IMR-90 (cell line): ENCODE measurements at regions of chr12 and their contacts with region 1.

Region 1: DNA sequence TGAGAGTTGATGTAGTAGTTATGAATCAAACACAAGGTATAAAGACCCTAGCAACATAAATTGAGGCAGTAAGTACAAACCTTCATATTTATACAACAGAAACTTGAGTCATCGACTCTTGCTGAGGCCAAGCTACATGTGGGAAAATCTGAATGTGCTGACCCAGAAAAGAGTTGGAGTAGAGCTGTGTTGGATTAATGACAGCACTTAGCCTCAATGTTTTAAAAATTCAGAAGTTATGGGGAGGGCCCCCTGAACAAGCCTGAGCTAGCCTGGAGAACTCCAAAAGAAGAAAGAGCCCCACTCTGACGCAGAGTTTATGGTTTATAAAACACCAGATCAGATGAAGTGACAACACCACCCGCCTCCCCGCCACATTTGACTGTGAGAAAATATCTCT is 100.0 kb downstream of the DUSP6 start:
- DNase-seq: peak; percentile 76
- ATAC-seq: peak; percentile 48
- H3K4me3 ChIP-seq: no peak overlapping the region
- H3K27ac ChIP-seq: no peak overlapping the region
- H3K4me1 ChIP-seq: peaks cover 9% of the 10 kb centered on the region
- H3K27me3 ChIP-seq: no peaks in the 10 kb centered on the region
- CTCF ChIP-seq: no peak
- POLR2A ChIP-seq: no peak
- RAD21 ChIP-seq: no peak

Region 2: DNA sequence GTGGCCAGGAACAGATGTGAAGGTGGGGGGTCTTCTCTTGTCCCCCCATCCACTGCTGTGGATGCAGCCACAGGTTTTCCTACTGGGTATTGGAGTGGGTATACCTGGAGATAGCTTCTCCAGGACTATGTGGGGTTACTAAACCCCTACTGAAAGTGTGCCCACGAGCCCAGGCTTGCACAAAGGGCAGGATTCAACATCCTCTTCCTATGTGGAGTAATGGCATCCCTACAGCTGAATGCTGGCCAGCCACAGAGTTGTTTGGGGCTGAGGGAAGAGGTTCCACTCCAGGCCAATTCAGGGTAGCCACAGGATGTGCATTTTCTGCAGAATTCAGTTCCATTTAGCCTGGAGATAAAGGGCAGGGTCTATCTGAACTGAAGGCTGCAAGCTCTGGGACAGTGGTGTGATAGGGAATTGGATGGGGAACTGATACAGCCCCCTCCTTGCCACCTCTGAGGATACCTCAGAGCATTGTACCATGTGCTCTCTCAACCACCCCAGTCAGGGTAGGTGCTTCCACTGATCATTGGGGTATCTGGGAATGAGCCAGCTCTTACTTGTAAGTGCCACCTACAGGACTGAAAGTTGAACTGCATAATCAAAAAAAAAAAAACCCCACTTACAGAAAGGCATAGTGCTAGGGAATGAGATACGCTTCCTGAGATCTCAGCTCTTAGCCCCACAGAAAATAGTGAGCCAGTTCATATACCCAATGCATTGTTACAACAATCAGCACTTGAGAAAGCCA is 859.1 kb before region 1 on chr12:
- CTCF ChIA-PET with region 1: no interaction called
- POLR2A ChIA-PET with region 1: no interaction called
- dilution Hi-C with region 1: no loop called
- in situ Hi-C with region 1: no loop called
- intact Hi-C with region 1: loop called (anchors 5 kb)
- DNase-seq: peak; percentile 35
- ATAC-seq: no peak
- H3K4me3 ChIP-seq: no peak overlapping the region
- H3K27ac ChIP-seq: no peak overlapping the region
- H3K4me1 ChIP-seq: peaks cover 4% of the 10 kb centered on the region
- H3K27me3 ChIP-seq: no peaks in the 10 kb centered on the region
- CTCF ChIP-seq: peak; percentile 35; the same call in 1 of the 2 replicates
- POLR2A ChIP-seq: no peak
- RAD21 ChIP-seq: peak; percentile 32